ENCODE measurements at regions of chr1 and their contacts with region 1.

Region 1: DNA sequence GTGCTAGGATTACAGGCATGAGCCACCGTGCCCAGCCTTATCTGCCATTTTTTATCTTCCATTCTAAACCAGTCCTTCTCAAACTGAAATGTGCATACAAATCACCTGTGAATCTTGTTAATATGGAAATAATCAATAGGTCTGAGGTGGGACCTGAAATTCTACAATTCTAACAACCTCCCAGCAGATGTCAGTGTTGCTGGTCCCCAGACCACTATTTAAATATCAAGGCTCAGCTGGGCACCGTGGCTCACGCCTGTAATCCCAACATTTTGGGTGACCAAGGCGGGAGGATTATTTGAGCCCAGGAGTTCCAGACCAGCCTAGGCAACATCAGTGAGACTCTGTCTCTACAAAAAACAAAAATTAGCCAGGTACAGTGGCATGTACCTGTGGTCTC is 4.1 kb downstream of the UQCRHL start:
- DNase-seq: no peak
- H3K4me3 ChIP-seq: no peak overlapping the region
- H3K27ac ChIP-seq: no peak overlapping the region
- H3K4me1 ChIP-seq: peaks cover 8 to 17% of the 10 kb centered on the region in 2 donors
- H3K27me3 ChIP-seq: no peaks in the 10 kb centered on the region
- CTCF ChIP-seq: peak in 2 of 3 donors; percentile 29
- POLR2A ChIP-seq: no peak

Region 2: GRCh38 chr1:15760520-15761211 is 42.7 kb before region 1 on chr1:
- intact Hi-C with region 1: no loop called
- DNase-seq: no peak
- H3K4me3 ChIP-seq: peak overlapping the region in 2 of 3 donors; percentile 23 to 96
- H3K27ac ChIP-seq: peak overlapping the region; percentile 80 to 93
- H3K4me1 ChIP-seq: peaks cover 5 to 22% of the 10 kb centered on the region in 2 donors
- H3K27me3 ChIP-seq: no peaks in the 10 kb centered on the region
- CTCF ChIP-seq: no peak
- POLR2A ChIP-seq: no peak

Region 3: DNA sequence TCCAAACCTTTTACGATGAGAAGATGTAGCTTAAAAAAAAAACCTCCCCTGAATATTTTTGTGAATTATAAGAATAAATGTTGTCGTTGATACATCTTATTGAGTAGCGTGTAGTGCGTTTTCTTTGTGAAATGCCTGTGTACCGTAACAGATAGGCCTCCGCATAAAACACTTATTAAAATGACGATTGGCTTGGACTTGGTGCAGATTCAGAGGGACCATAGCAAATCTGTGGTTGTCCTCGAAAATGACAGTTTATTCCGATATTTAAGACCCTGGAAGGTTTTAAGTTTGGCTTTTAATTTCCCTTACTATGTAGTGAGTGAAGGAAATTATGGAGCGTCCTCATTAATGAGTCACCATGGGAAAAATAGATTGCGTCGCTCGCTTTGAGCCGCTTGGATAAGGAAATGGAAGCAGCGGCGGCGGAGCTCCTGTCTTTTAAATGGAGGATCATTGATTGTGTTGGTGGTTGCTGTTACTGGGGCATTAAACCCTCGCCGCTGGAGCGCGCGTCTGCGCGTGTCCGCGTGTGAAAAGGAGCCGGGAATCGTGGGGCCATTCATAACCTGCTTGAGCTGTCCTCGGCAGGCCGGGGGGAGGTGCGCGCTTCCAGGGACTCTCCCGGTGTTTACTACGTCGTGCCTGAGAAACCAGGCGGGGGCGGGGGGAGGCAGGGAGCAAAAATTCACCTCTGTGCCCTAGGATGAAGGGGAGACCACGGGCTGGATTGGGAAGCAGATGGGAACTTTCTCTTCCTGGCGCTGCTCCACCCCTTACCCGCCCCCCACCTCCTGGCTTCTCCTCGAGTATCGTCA is 45.8 kb after region 1 on chr1:
- intact Hi-C with region 1: loop called (anchors 1 kb)
- DNase-seq: peak; percentile 89 to 91
- H3K4me3 ChIP-seq: peak overlapping the region; percentile 84 to 95 (median 94)
- H3K27ac ChIP-seq: peak overlapping the region; percentile 96 to 98
- H3K4me1 ChIP-seq: peaks cover 0 to 7% of the 10 kb centered on the region in 2 donors
- H3K27me3 ChIP-seq: no peaks in the 10 kb centered on the region
- CTCF ChIP-seq: peak in 1 of 3 donors; percentile 42
- POLR2A ChIP-seq: peak; percentile 72

Region 4: GRCh38 chr1:16009030-16009709 is 205.8 kb after region 1 on chr1:
- intact Hi-C with region 1: loop called (anchors 10 kb)
- DNase-seq: peak; percentile 66 to 79
- H3K4me3 ChIP-seq: no peak overlapping the region
- H3K27ac ChIP-seq: no peak overlapping the region
- H3K4me1 ChIP-seq: peaks cover 0 to 3% of the 10 kb centered on the region in 2 donors
- H3K27me3 ChIP-seq: no peaks in the 10 kb centered on the region
- CTCF ChIP-seq: peak; percentile 96 to 98 (median 97)
- POLR2A ChIP-seq: no peak